Activated naive CD4-positive, alpha-beta T cell treated with anti-CD3 and anti-CD28 coated beads for 36 hours (primary cell): ENCODE measurements at regions of chr2 and their contacts with region 1.

Region 1: GRCh38 chr2:181457121-181457740 is at the start of gene ITGA4:
- DNase-seq: peak; percentile 88
- H3K4me3 Mint-ChIP-seq: peak within 1 kb of the TSS; percentile 92
- H3K27ac Mint-ChIP-seq: peak within 1 kb of the TSS; percentile 93
- H3K4me1 Mint-ChIP-seq: peaks cover 39% of the 10 kb centered on the region
- H3K27me3 Mint-ChIP-seq: no peaks in the 10 kb centered on the region
- total RNA-seq, gene ITGA4: 26.6 to 27.8 TPM

Region 2: GRCh38 chr2:180125245-180125962 is 1331.8 kb before region 1 on chr2:
- CTCF ChIA-PET with region 1: no interaction called
- intact Hi-C with region 1: loop called (anchors 2 kb)
- DNase-seq: peak; percentile 64
- H3K4me3 Mint-ChIP-seq: no peak overlapping the region
- H3K27ac Mint-ChIP-seq: no peak overlapping the region
- H3K4me1 Mint-ChIP-seq: peaks cover 3% of the 10 kb centered on the region
- H3K27me3 Mint-ChIP-seq: peaks cover 10% of the 10 kb centered on the region

Region 3: GRCh38 chr2:181077128-181077709 is 380.0 kb before region 1 on chr2:
- CTCF ChIA-PET with region 1: no interaction called
- intact Hi-C with region 1: loop called (anchors 1 kb)
- DNase-seq: peak; percentile 8
- H3K4me3 Mint-ChIP-seq: no peak overlapping the region
- H3K27ac Mint-ChIP-seq: no peak overlapping the region
- H3K4me1 Mint-ChIP-seq: peaks cover 6% of the 10 kb centered on the region
- H3K27me3 Mint-ChIP-seq: no peaks in the 10 kb centered on the region

Region 4: DNA sequence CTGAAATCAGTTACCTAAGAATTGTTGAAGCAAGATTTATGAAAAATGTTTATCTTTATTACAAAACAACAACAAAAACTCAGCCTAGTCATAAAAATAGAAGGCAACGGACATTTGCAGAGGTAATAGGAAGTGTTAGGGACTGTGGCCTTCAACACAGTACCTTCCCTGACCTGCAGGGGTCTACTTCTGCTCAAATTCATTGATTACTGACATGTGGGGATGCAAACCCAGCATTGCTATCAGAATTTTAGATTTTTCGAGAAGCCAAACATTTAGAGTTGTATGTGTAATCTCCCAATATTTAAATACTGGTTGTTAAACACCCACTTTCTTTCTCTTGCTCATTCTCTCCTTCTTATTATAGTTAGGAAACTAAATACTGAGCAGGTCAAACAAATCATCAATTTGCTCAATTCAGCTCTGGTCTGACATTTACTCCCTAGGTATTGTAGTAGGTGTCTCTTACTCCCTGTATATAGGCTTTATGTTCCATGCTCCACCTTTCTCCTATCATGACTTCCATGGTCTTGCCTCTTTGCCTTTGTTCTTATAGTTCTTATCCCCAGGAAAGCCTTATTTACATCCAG is 278.3 kb before region 1 on chr2:
- CTCF ChIA-PET with region 1: no interaction called
- intact Hi-C with region 1: loop called (anchors 1 kb)
- DNase-seq: peak; percentile 61
- H3K4me3 Mint-ChIP-seq: no peak overlapping the region
- H3K27ac Mint-ChIP-seq: peak overlapping the region; percentile 5
- H3K4me1 Mint-ChIP-seq: peaks cover 48% of the 10 kb centered on the region
- H3K27me3 Mint-ChIP-seq: no peaks in the 10 kb centered on the region

Region 5: DNA sequence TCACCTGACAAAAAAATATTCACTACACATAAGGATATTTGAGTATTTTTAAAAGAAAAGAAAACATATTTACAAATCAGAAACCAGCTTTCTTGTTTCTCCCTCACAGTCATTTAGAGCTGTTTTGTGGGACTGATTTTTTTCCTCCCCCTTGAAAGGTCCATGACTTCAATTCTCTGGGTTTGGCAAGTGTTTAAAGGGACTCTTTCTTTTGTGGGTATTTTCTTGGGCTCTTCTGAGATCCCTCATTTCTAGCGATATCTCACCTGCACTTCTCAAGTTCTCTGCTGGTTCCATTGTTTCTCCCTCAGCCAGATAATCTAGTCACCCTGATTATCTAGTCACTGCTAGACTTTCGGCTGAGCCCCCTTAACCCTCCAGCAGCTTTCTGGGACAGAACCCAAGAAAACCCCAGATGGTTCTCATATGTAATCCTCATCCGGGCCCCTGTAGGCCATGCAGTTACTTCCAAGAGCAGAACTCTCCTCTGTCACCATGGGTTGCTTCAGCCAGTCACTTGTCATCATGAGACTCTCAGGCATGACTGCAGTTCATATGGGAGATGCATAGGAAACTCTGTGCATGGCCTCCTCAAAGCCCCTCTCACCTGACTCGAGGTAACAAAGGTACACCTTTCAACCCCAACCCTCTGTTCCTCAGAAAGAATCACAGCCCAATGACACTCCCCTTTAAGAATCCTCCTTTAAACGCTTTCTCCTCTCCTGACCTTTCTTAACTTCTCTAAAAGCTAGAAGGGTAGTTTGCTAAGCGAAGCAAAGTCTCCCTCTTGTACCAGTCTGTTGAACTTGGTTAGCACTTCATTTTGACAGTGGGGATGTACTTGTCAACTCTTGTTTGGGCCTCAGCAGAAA is 36.7 kb before region 1 on chr2:
- CTCF ChIA-PET with region 1: no interaction called
- intact Hi-C with region 1: loop called (anchors 5 kb)
- DNase-seq: peak; percentile 13
- H3K4me3 Mint-ChIP-seq: no peak overlapping the region
- H3K27ac Mint-ChIP-seq: peak overlapping the region; percentile 38
- H3K4me1 Mint-ChIP-seq: peaks cover 24% of the 10 kb centered on the region
- H3K27me3 Mint-ChIP-seq: no peaks in the 10 kb centered on the region

Region 6: DNA sequence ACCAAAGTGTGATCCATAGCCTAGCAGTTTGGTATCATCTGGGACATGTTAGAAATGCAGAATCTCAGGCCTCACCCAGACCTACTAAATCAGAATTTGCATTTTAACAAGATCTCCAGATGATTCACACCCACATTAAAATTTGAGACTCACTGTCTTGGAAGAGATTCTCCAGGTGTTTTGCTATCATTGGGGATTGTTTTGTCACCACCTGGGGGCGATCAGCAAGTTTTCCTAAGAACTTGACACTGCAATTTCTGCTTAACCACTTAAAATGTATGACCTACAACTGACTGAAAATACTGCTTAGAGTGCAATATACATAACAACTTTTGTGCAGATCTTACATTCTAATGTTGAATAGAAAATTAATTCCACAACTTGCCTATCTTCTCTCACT is 19.0 kb before region 1 on chr2:
- CTCF ChIA-PET with region 1: interaction called, 6 read pairs
- intact Hi-C with region 1: loop called (anchors 2 kb)
- DNase-seq: peak; percentile 47
- H3K4me3 Mint-ChIP-seq: no peak overlapping the region
- H3K27ac Mint-ChIP-seq: no peak overlapping the region
- H3K4me1 Mint-ChIP-seq: peaks cover 27% of the 10 kb centered on the region
- H3K27me3 Mint-ChIP-seq: no peaks in the 10 kb centered on the region

Region 7: GRCh38 chr2:181528441-181528840 is 71.2 kb after region 1 on chr2:
- CTCF ChIA-PET with region 1: no interaction called
- intact Hi-C with region 1: no loop called
- DNase-seq: no peak
- H3K4me3 Mint-ChIP-seq: no peak overlapping the region
- H3K27ac Mint-ChIP-seq: no peak overlapping the region
- H3K4me1 Mint-ChIP-seq: no peaks in the 10 kb centered on the region
- H3K27me3 Mint-ChIP-seq: no peaks in the 10 kb centered on the region

Region 8: GRCh38 chr2:181677912-181678586 is 220.8 kb after region 1 on chr2:
- CTCF ChIA-PET with region 1: no interaction called
- intact Hi-C with region 1: no loop called
- DNase-seq: peak; percentile 84
- H3K4me3 Mint-ChIP-seq: peak overlapping the region; percentile 9
- H3K27ac Mint-ChIP-seq: no peak overlapping the region
- H3K4me1 Mint-ChIP-seq: peaks cover 43% of the 10 kb centered on the region
- H3K27me3 Mint-ChIP-seq: peaks cover 70% of the 10 kb centered on the region

Region 9: GRCh38 chr2:181861379-181861778 is 404.1 kb after region 1 on chr2:
- CTCF ChIA-PET with region 1: no interaction called
- intact Hi-C with region 1: no loop called
- DNase-seq: no peak
- H3K4me3 Mint-ChIP-seq: no peak overlapping the region
- H3K27ac Mint-ChIP-seq: no peak overlapping the region
- H3K4me1 Mint-ChIP-seq: no peaks in the 10 kb centered on the region
- H3K27me3 Mint-ChIP-seq: peaks cover 2% of the 10 kb centered on the region